ENCODE measurements at regions of chr11 and their contacts with region 1.

Region 1: DNA sequence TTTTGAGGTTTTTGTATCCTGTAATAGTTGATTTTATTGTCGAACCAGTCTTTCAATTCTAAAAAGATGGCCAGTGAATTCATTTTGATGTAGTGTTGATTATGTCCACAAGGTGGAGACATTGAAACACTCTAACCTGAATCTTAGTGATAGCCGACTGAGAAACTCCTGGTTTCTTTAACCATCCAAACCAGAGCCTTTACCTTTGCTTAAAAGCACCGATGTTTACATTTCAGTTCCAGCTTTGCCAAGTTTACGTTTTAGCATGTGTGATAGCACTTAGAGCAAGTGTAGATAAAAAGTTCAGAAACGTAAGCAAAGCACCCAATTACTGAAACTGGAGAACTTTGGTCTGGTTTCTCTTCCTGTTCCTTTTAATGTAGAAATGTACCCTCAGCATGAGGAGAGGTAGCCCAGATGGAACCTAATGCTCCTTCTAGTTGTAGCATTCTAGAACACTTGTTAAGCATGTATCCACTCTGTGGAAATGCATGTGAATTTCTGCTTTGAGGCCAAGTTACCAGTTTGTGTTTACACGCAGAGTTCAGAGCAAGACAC is 208.6 kb downstream of the DBX1 start:
- DNase-seq: peak in 3 of 14 experiments; percentile 46 to 61 (median 52)
- ATAC-seq: no peak
- H3K4me3 ChIP-seq: peak overlapping the region; percentile 5
- H3K4me3 Mint-ChIP-seq: peak overlapping the region; percentile 32
- H3K27ac ChIP-seq: no peak overlapping the region
- H3K27ac Mint-ChIP-seq: no peak overlapping the region
- H3K4me1 ChIP-seq: no peaks in the 10 kb centered on the region
- H3K4me1 Mint-ChIP-seq: peaks cover 9% of the 10 kb centered on the region
- H3K27me3 ChIP-seq: peaks cover 0 to 2% of the 10 kb centered on the region in 2 experiments
- H3K27me3 Mint-ChIP-seq: peaks cover 34% of the 10 kb centered on the region
- CTCF ChIP-seq: peak; percentile 75

Region 2: DNA sequence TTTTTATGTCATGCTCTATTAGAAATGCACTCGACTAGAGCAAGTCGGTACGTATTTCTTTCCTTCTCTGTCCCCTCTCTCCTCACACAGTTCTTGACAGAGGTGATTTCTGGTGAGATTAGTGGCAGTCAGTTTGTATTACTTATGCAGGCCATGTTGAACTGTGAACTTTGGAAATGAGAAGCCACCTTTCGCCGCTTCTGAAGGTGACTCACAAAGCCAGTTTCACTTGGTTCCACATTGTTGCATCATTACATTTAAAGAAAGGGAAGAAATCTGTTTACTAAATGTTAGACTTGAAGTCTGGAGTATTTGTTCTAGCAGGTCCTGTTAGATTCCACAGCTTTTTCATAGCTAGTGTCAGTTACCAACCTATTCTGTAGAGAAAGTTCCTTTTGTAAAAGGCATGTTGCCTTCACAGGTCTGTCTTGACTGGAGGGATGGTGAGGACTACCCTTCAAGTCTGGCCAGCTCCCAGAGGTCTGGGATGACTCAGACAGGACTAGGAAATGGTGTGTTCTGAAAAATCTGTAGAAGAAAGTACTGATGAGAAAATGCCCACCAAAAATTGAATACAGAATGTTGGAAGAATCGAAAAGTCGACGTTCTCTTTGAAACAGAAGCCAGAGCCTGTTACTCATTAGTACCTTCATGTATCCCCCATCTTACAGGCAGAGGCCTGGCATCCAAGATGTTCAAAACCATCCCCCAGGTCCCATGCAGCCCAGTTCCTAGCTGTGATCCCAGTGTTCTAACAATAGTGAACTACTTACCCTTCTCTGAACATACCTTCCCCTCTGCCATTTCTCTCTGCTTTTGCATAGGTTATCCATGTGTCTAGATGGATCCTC is 27.3 kb after region 1 on chr11:
- CTCF ChIA-PET with region 1: no interaction called
- POLR2A ChIA-PET with region 1: no interaction called
- intact Hi-C with region 1: no loop called
- DNase-seq: no peak
- ATAC-seq: no peak
- H3K4me3 ChIP-seq: no peak overlapping the region
- H3K4me3 Mint-ChIP-seq: no peak overlapping the region
- H3K27ac ChIP-seq: no peak overlapping the region
- H3K27ac Mint-ChIP-seq: no peak overlapping the region
- H3K4me1 ChIP-seq: no peaks in the 10 kb centered on the region
- H3K4me1 Mint-ChIP-seq: no peaks in the 10 kb centered on the region
- H3K27me3 ChIP-seq: no peaks in the 10 kb centered on the region
- H3K27me3 Mint-ChIP-seq: no peaks in the 10 kb centered on the region
- CTCF ChIP-seq: no peak

Region 3: DNA sequence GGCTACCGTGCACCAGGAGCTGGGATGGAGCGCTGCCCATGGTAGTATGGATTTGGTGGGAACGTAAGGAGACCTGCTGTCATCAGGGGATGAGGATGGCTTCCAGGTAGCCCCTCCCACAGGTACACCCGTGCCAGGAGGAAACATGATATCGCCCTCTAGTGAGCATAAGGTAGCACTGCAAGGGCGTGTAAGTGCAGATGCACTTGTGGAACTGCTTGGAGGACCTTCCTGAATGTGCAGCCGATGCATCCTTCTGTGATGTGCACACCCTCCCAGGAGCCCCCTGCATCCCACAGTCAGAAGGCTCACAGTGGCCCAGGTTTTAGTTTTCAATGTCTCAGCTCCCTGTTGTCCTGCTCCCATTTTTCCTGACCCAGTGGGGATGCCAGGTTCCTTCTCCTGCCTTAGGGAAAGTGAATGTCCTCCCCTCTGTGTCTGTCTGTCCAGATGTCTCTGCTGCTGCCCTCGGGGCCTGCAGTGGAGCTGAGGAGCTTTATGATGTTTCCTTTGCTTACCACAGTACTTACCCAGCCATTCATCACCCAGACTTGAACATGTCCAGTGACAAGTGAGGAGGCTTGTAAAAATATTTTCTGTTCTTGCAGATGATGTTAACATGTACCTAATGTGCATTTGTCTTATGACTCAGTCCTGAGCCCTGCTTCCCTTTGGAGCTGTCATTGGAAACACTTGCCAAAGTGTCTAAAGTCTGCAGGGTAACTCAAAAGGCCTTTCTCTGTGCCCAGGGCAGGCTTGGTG is 159.5 kb after region 1 on chr11:
- CTCF ChIA-PET with region 1: no interaction called
- POLR2A ChIA-PET with region 1: no interaction called
- intact Hi-C with region 1: loop called (anchors 5 kb)
- DNase-seq: peak in 8 of 14 experiments; percentile 2 to 63 (median 26)
- ATAC-seq: peak; percentile 58
- H3K4me3 ChIP-seq: no peak overlapping the region
- H3K4me3 Mint-ChIP-seq: no peak overlapping the region
- H3K27ac ChIP-seq: no peak overlapping the region
- H3K27ac Mint-ChIP-seq: no peak overlapping the region
- H3K4me1 ChIP-seq: peaks cover 8% of the 10 kb centered on the region
- H3K4me1 Mint-ChIP-seq: no peaks in the 10 kb centered on the region
- H3K27me3 ChIP-seq: no peaks in the 10 kb centered on the region
- H3K27me3 Mint-ChIP-seq: no peaks in the 10 kb centered on the region
- CTCF ChIP-seq: peak; percentile 72

Region 4: DNA sequence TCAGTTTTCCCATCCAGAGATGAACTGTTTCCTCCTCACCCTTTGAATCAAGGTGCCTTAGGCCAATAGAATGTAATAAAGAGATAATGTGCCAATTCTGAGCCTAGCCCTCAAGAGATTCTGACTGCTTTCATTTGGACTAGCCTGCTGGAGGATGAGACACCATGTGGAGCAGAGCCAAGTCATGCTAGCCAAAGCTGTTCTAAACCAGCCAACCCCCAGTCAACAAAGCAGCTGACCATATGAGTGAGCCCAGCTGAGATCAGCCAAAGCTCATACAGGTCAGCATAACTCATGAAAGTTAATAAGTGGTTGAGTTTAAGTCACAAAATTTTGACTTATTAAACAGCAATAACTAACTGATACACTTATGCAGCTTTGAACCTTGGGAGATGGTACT is 275.3 kb after region 1 on chr11:
- CTCF ChIA-PET with region 1: no interaction called
- POLR2A ChIA-PET with region 1: no interaction called
- intact Hi-C with region 1: no loop called
- DNase-seq: no peak
- ATAC-seq: no peak
- H3K4me3 ChIP-seq: no peak overlapping the region
- H3K4me3 Mint-ChIP-seq: no peak overlapping the region
- H3K27ac ChIP-seq: no peak overlapping the region
- H3K27ac Mint-ChIP-seq: no peak overlapping the region
- H3K4me1 ChIP-seq: no peaks in the 10 kb centered on the region
- H3K4me1 Mint-ChIP-seq: no peaks in the 10 kb centered on the region
- H3K27me3 ChIP-seq: peaks cover 0 to 8% of the 10 kb centered on the region in 2 experiments
- H3K27me3 Mint-ChIP-seq: peaks cover 9% of the 10 kb centered on the region
- CTCF ChIP-seq: no peak

Region 5: GRCh38 chr11:20355221-20356219 is 403.9 kb after region 1 on chr11:
- CTCF ChIA-PET with region 1: no interaction called
- POLR2A ChIA-PET with region 1: no interaction called
- intact Hi-C with region 1: loop called in 1 of 2 experiments (anchors 2 kb)
- DNase-seq: peak in 10 of 14 experiments; percentile 15 to 70 (median 34)
- ATAC-seq: peak; percentile 90
- H3K4me3 ChIP-seq: no peak overlapping the region
- H3K4me3 Mint-ChIP-seq: no peak overlapping the region
- H3K27ac ChIP-seq: no peak overlapping the region
- H3K27ac Mint-ChIP-seq: no peak overlapping the region
- H3K4me1 ChIP-seq: peaks cover 12% of the 10 kb centered on the region
- H3K4me1 Mint-ChIP-seq: peaks cover 16% of the 10 kb centered on the region
- H3K27me3 ChIP-seq: no peaks in the 10 kb centered on the region
- H3K27me3 Mint-ChIP-seq: no peaks in the 10 kb centered on the region
- CTCF ChIP-seq: peak; percentile 73